ENCODE measurements at regions of chr12 and their contacts with region 1.

Region 1: DNA sequence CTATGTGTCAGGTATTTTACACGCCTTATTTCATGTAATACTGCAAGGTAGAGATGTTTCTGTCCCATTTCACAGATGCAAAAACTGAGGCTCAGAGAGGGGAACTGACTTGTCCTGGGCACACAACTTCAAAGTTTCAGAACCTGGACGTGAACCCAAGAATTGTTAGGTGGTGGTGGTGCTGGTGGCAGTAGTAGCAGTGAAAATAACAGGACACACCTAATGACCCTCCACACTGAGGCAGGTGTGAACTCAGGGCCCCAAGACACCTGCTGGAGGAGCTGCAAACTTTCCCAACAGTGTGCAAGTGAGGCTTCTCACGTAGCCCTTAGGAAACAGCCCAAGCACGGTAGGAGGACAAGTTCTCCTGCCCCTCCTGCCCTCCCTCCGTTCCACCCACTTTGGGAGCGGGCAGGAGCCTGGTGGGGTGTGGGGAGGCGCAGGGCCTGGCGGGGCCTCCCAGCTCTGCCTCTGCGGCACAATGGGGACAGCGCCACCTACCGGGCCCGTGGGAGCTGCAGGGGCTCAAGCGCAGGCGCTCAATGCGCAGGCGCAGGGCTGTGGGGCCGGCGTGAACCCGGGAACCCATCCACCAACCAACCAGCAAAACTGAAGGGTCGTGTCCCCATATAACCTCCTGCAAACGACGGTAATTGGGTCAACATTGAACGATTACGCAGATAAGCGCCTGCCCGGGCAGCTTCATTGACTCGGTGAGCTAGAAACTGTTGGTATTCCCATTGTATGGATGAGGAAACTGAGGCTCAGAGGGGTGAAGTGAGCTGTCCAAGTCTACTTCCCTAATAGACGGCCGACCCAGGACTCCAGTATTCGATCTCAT is 12.0 kb upstream of the TRPV4 start:
- DNase-seq: peak; percentile 49 to 92 (median 82)
- ATAC-seq: peak; percentile 95 to 99 (median 97)
- H3K4me3 ChIP-seq: peak overlapping the region; percentile 26 to 47
- H3K4me3 Mint-ChIP-seq: no peak overlapping the region
- H3K27ac ChIP-seq: no peak overlapping the region
- H3K27ac Mint-ChIP-seq: no peak overlapping the region
- H3K4me1 ChIP-seq: peaks cover 0 to 8% of the 10 kb centered on the region in 2 experiments
- H3K4me1 Mint-ChIP-seq: peaks cover 0 to 6% (median 0%) of the 10 kb centered on the region in 3 donors
- H3K27me3 ChIP-seq: peaks cover 0 to 3% of the 10 kb centered on the region in 2 experiments
- H3K27me3 Mint-ChIP-seq: no peaks in the 10 kb centered on the region

Region 2: GRCh38 chr12:109518820-109519665 is 326.2 kb before region 1 on chr12:
- CTCF ChIA-PET with region 1: interaction called, 4 to 10 read pairs
- POLR2A ChIA-PET with region 1: no interaction called
- DNase-seq: peak in 31 of 35 experiments; percentile 7 to 73 (median 45)
- ATAC-seq: peak; percentile 45 to 62 (median 48)
- H3K4me3 ChIP-seq: no peak overlapping the region
- H3K4me3 Mint-ChIP-seq: no peak overlapping the region
- H3K27ac ChIP-seq: no peak overlapping the region
- H3K27ac Mint-ChIP-seq: no peak overlapping the region
- H3K4me1 ChIP-seq: no peaks in the 10 kb centered on the region
- H3K4me1 Mint-ChIP-seq: no peaks in the 10 kb centered on the region
- H3K27me3 ChIP-seq: no peaks in the 10 kb centered on the region
- H3K27me3 Mint-ChIP-seq: no peaks in the 10 kb centered on the region

Region 3: DNA sequence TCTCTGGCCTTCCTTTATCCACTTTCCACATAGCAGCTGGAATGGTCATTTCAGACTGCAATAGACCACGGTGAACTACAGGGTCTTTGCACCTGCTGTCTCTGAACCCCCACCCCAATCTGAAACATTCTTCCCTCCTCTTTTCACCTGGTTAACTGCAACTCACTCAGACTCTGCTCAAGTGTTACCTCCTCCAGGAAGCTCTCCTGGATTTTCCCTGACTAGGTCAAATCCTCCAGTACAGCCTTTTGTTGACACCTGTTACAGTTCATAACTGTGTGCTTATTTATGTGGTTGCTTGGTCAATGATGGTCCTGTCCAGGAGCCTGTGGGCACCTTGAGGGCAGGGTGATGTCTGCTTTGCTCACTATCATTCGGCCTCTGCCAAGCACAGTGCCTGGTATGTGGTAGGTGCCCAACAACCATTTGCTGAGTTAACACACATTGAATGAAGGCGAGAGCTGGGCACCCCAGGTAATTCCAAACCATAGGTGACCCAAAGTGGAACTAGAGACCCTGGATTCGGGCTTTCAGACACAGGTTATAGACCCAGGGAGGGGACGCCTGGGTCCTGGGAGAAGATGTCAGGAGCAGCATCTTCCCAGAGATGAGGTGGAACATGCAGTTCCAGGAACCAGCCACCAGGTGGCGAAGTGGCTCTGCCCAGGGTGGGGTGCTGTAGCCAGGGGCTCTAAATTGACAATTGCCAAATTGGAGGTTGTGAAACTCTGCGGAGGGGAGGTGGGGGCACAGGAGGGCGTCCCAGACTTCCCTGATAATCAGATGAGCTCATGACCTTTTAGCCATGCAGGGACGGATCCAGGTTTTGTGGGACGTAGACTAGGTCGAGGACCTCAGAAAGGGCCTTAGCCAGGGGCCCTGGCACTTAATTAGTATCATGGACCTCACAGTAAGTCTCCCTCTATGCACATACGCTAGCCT is 40.1 kb before region 1 on chr12:
- CTCF ChIA-PET with region 1: interaction called, 11 to 24 read pairs
- POLR2A ChIA-PET with region 1: no interaction called
- DNase-seq: peak; percentile 13 to 79 (median 59)
- ATAC-seq: peak; percentile 78 to 83 (median 81)
- H3K4me3 ChIP-seq: no peak overlapping the region
- H3K4me3 Mint-ChIP-seq: no peak overlapping the region
- H3K27ac ChIP-seq: no peak overlapping the region
- H3K27ac Mint-ChIP-seq: no peak overlapping the region
- H3K4me1 ChIP-seq: peaks cover 0 to 5% of the 10 kb centered on the region in 2 experiments
- H3K4me1 Mint-ChIP-seq: peaks cover 0 to 2% (median 0%) of the 10 kb centered on the region in 3 donors
- H3K27me3 ChIP-seq: peaks cover 0 to 11% of the 10 kb centered on the region in 2 experiments
- H3K27me3 Mint-ChIP-seq: peaks cover 0 to 3% of the 10 kb centered on the region in 2 donors

Measured in T-cell (primary cell).